AG04449 (cell line): ENCODE measurements at regions of chr12 and their contacts with region 1.

Region 1: DNA sequence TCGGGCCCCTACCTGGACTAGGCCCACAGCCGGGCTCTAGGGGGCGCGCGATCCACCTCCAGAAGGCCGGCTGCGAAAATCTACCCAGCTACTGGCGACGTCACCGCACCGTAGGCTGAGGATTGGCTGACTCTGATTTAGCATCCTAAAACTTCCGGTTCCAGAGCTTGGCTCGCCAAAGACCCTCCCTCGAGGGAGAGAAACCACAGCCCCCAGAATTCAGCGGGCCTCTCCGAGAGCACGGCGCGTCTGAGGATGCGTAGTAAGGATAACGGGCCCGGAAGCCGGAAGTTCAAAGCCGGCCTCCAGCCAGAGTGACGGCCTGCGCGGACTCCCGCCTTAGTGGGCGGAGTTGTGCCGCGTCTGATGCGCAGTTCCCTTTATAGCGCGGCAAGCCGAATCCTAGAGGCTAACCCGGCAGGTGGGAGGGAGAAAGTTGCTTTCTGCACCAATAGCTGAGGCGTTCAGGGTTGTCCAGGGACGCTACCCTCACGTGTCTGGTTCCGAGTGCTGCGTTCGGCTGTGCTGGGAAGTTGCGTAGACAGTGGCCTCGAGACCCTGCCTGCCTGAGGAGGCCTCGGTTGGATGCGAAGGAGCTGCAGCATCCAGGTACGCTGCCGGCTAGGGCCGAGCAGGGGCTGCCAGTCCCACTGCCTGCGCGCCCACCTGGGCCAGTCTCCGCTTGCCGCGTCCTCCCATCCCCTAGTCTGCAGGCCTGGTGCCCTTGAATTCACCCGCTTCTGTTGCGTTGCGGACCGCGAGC is at the start of gene COX14:
- DNase-seq: peak; percentile 97
- H3K4me3 ChIP-seq: peak within 1 kb of the TSS; percentile 98
- CTCF ChIP-seq: peak; percentile 96

Region 2: GRCh38 chr12:49789992-49790391 is 321.9 kb before region 1 on chr12:
- CTCF ChIA-PET with region 1: no interaction called
- POLR2A ChIA-PET with region 1: no interaction called
- DNase-seq: no peak
- H3K4me3 ChIP-seq: no peak overlapping the region
- CTCF ChIP-seq: no peak

Region 3: GRCh38 chr12:50049254-50050118 is 62.4 kb before region 1 on chr12:
- CTCF ChIA-PET with region 1: no interaction called
- POLR2A ChIA-PET with region 1: no interaction called
- DNase-seq: no peak
- H3K4me3 ChIP-seq: no peak overlapping the region
- CTCF ChIP-seq: no peak

Region 4: DNA sequence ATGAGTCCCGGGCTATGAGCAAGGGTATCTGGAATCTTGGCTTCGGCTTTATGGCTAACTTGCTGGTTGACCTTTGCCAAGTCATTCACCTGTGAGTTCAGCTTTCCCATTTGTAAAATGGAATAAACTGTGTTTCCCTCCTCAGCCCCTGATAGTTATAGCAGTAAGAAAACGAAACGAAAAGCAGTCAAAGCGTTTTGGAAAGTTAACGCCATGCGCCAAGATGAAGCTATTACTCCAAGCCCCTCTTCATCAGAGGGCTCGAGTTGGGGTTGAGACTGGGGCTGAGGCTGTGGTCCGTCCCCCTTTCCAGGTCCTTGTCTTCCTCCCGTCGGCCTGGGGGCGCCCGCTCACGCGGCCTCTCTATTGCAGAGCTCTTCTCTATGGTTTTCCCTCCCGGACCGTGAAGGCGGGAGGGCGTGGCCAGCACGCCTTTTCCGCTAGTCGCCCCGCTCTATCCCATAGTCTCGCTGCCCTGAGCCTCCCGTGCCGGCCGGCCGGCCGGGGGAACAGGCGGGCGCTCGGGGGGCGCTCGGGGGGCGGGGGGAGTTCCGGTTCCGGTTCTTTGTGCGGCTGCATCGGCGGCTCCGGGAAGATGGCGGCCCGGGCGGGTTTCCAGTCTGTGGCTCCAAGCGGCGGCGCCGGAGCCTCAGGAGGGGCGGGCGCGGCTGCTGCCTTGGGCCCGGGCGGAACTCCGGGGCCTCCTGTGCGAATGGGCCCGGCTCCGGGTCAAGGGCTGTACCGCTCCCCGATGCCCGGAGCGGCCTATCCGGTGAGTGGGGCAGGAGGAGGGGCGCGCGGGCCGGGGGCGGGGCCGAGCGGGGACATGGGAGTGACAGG is 26.9 kb before region 1 on chr12 and contains the start of gene SMARCD1:
- CTCF ChIA-PET with region 1: interaction called, 140 read pairs
- POLR2A ChIA-PET with region 1: interaction called, 9 read pairs
- DNase-seq: no peak
- H3K4me3 ChIP-seq: peak within 1 kb of the TSS; percentile 84
- CTCF ChIP-seq: peak; percentile 72

Region 5: DNA sequence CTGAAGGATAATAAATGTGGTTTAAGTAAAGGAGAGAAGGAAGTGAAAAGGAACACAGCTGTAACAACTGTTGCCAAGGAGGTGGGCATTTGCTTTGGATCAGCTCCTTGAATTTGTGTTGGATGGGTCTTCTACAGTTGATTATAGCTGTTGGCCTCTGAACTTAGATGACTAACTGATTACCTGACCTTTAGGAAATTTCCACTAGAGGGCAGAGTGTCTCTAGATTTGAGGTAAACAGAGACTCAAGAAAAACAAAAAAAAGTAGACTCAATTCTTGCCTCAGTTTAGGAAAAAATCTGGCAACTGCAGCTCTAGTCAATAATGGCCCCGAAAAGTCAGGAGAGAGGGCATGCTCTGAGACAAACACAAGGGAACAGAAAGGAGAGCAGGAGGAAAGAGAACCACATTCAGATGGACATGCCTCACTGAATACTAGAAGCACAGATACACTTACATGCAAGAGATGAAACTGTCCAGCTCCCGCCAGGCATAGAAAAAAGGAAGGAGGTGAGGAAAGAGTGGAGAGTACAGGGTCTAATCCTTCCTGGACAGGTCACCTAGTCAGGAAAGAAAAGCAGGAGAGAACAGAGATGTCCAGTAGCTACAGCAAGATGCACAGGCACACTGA is 20.7 kb after region 1 on chr12:
- CTCF ChIA-PET with region 1: interaction called, 14 read pairs
- POLR2A ChIA-PET with region 1: interaction called, 7 read pairs
- DNase-seq: no peak
- H3K4me3 ChIP-seq: no peak overlapping the region
- CTCF ChIP-seq: peak; percentile 20

Region 6: GRCh38 chr12:50167041-50167828 is 55.4 kb after region 1 on chr12 and contains the start of gene CERS5:
- CTCF ChIA-PET with region 1: interaction called, 29 read pairs
- POLR2A ChIA-PET with region 1: interaction called, 6 read pairs
- DNase-seq: peak; percentile 87
- H3K4me3 ChIP-seq: peak within 1 kb of the TSS; percentile 85
- CTCF ChIP-seq: peak; percentile 16

Region 7: GRCh38 chr12:50187084-50187900 is 75.4 kb after region 1 on chr12:
- CTCF ChIA-PET with region 1: interaction called, 12 read pairs
- POLR2A ChIA-PET with region 1: no interaction called
- DNase-seq: peak; percentile 91
- H3K4me3 ChIP-seq: no peak overlapping the region; the same call in 1 of the 2 replicates
- CTCF ChIP-seq: peak; percentile 14